Psoas muscle (tissue), 8 donors: ENCODE measurements at regions of chr6 and their contacts with region 1.

Region 1: DNA sequence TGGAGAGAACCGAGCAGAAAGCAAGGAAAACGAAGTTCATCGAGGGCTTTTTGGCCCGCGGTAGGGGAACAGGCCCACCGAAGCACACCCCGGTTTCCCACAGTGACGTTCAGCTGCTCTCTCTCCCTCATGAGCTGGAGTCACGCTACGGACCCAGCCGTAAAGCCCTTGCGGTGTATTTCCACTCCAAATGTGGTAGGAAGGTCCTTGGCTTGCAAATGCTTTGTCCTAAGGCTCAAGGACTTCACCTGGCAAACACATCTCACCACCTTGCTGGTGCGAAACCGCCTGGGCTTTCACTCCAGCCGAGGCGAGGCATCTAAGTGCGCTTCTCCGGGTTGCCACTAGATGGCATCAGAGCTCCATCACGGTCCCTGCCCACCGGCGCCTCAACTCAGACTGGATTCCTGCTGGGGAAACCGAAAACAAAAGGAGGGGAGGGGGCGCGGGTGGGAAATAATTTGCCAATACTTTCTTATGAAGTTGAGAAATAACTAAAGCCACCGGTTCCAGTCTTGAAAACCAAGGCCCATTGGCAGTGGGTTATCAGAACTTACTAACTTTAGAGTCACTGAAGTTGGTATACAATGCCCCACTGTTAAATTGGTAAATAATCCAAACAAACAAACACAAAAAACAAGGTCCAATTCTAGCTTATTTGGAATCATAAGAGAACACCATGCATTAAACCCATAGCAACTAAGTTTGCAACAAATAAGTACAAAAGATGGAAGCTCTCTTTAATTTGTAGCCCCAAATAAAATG is 13.4 kb upstream of the FOXC1 start:
- DNase-seq: peak; percentile 56 to 74
- ATAC-seq: peak; percentile 84 to 95 (median 90)
- H3K4me3 ChIP-seq: peak overlapping the region; percentile 31
- H3K27ac ChIP-seq: no peak overlapping the region
- H3K4me1 ChIP-seq: no peaks in the 10 kb centered on the region
- H3K27me3 ChIP-seq: peaks cover 0 to 35% (median 22%) of the 10 kb centered on the region in 3 donors
- CTCF ChIP-seq: peak; percentile 96

Region 2: DNA sequence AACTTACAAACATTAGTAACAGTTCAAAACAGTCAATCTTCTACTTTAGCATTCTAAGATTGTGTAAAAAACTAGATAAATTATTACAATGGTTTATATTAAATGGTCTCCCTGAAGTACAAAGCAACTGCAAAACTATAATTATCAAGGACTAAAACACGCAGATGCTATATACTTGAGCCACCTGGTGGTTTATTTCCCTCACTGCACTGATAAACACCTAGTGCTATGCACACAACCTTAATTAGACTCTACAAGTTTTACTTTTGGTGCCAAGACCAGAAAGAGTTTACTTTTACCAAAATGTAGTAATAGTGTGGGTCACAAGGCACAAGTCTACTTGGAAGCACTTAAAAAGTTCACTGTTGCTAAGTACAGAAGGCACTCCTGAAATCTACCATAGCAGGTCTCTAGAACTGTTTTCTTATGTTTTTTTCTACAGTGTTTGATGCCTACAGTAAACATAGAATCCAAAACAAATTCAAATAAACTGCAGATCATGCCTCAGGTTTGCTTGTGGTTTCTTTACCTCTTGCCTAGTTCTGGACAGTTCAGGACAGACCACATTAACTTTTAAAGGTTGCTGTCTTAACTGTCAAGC is 599.9 kb after region 1 on chr6:
- intact Hi-C with region 1: loop called (anchors 1 to 5 kb)
- DNase-seq: no peak
- ATAC-seq: peak; percentile 56 to 88 (median 64)
- H3K4me3 ChIP-seq: no peak overlapping the region
- H3K27ac ChIP-seq: no peak overlapping the region
- H3K4me1 ChIP-seq: no peaks in the 10 kb centered on the region
- H3K27me3 ChIP-seq: peaks cover 0 to 3% (median 0%) of the 10 kb centered on the region in 3 donors
- CTCF ChIP-seq: peak; percentile 85

Region 3: DNA sequence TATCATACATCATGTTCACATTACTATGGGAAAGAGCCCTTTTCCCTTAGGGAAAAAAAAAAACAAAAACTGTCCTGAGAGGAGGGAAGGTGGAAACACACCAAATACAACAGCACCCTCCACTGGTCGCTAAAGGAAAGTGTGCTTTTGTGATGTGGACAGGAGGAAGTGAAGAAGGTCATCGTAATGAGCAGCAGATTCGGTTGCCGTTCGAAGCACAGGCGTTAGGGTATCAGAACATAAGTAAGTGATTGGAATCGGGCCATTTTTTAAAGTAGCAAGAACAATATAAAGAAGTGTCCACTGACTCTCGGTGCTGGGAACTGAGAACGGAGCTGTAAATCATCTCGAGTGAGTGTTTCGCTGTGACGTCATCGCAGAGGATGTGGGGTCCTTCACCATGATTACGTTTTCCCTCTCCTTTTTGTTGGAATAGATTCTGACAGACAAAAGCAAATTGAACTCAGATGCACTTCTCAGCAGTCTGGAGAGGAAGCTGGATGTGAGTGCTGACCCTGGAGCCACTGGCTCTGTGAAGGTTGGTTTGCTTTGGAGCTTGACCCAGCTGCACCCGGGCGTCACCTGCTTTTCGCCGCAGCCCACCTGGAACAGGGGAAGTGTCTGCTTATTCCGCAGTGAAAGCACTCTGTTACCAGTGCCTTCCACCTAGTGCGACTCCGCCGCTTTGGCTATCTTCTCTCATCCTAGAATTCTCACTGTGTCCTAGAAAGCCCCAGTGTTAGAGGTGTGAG is 852.7 kb after region 1 on chr6:
- intact Hi-C with region 1: loop called (anchors 10 kb)
- DNase-seq: no peak
- ATAC-seq: peak in 3 of 4 donors; percentile 49 to 78 (median 54)
- H3K4me3 ChIP-seq: no peak overlapping the region
- H3K27ac ChIP-seq: no peak overlapping the region
- H3K4me1 ChIP-seq: peaks cover 6% of the 10 kb centered on the region
- H3K27me3 ChIP-seq: no peaks in the 10 kb centered on the region
- CTCF ChIP-seq: peak; percentile 58

Region 4: DNA sequence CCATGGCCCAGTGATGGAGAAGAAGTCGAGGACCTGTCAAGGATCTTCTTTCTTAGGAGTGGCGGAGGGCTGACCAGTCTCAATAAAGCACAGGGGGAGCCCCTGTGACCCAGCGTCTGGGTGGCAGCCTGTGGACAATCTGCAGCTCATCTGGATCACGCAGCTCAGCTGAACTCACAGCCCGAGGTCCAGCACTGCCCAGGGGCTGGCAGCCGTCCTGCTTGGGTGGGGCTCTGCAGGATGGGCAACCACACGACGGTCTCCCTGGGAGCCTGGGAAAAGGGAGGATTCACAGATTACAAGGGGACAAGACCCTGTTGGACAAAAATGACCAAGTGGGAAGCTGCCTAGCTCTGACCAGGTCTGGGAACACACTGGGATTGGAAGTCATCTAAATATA is 1043.6 kb after region 1 on chr6:
- intact Hi-C with region 1: loop called in 1 of 2 experiments (anchors 5 kb)
- DNase-seq: no peak
- ATAC-seq: peak in 1 of 4 donors; percentile 44
- H3K4me3 ChIP-seq: no peak overlapping the region
- H3K27ac ChIP-seq: no peak overlapping the region
- H3K4me1 ChIP-seq: peaks cover 1% of the 10 kb centered on the region
- H3K27me3 ChIP-seq: no peaks in the 10 kb centered on the region
- CTCF ChIP-seq: no peak